ENCODE measurements at regions of chr3 and their contacts with region 1.

Region 1: GRCh38 chr3:49539659-49540560 is 14.4 kb upstream of the BSN start:
- DNase-seq: peak; percentile 82 to 97 (median 94)

Region 2: DNA sequence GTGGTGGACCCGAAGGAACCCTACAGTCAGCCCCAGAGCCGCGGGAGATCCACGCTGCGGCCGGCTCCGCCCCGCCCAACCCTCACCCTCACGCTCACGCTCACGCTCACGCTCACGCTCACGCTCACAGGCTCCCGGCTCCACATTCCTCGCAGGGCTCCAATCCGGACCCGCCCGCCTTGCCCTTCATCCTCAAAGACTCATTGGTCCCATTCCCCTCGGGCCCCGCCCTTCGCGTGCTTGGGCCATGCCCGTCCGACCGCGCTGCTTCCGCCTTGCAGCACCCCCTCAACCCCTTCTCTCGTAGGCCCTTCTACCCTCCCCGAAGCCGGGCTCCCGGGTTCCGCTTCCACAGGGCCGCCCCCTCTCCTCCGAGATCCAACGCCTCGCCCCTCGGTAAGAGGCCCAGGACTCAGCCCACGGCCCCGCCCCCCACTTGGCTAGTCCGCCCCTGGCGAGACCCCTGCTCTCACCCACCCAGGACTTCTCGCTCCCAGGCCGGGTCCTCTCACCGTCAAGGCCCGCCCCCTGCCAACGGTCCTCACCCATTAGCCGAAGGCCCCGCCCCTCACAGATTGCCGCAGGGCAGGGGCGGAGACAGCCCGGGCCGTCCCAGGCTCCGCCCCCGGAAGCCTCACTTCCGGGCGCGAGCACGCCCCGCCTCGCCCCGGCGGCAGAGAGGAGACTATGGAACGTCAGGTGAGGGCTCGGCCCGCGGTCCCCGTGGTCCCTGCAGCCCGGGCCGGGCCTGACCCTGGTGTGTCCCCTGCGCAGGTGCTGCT is 134.0 kb after region 1 on chr3 and contains the start of gene APEH:
- intact Hi-C with region 1: loop called (anchors 5 kb)
- DNase-seq: peak; percentile 86 to 98 (median 94)

Region 3: GRCh38 chr3:49769286-49769915 is 229.5 kb after region 1 on chr3:
- intact Hi-C with region 1: no loop called
- DNase-seq: no peak